A549 (cell line): ENCODE measurements at regions of chr1 and their contacts with region 1.

Region 1: GRCh38 chr1:81756872-81757271 is 43.9 kb upstream of the ADGRL2 start:
- DNase-seq: no peak
- ATAC-seq: no peak
- H3K4me3 ChIP-seq: no peak overlapping the region
- H3K27ac ChIP-seq: no peak overlapping the region
- H3K4me1 ChIP-seq: no peaks in the 10 kb centered on the region
- CTCF ChIP-seq: no peak
- EP300 ChIP-seq: no peak
- POLR2A ChIP-seq: no peak
- RAD21 ChIP-seq: no peak

Region 2: GRCh38 chr1:81549604-81550127 is 207.2 kb before region 1 on chr1:
- CTCF ChIA-PET with region 1: interaction called, 14 read pairs
- POLR2A ChIA-PET with region 1: no interaction called
- DNase-seq: peak; percentile 8 to 38
- ATAC-seq: peak; percentile 71 to 76; a peak in 5 of 6 replicates
- H3K4me3 ChIP-seq: no peak overlapping the region
- H3K27ac ChIP-seq: no peak overlapping the region
- H3K4me1 ChIP-seq: no peaks in the 10 kb centered on the region
- CTCF ChIP-seq: peak; percentile 53
- EP300 ChIP-seq: no peak
- POLR2A ChIP-seq: no peak
- RAD21 ChIP-seq: peak; percentile 65 to 68

Region 3: GRCh38 chr1:81775510-81775909 is 18.6 kb after region 1 on chr1:
- CTCF ChIA-PET with region 1: no interaction called
- POLR2A ChIA-PET with region 1: no interaction called
- DNase-seq: no peak
- ATAC-seq: no peak
- H3K4me3 ChIP-seq: no peak overlapping the region
- H3K27ac ChIP-seq: no peak overlapping the region
- H3K4me1 ChIP-seq: no peaks in the 10 kb centered on the region
- CTCF ChIP-seq: no peak
- EP300 ChIP-seq: no peak
- POLR2A ChIP-seq: no peak
- RAD21 ChIP-seq: no peak